ENCODE measurements at regions of chr1 and their contacts with region 1.

Region 1: DNA sequence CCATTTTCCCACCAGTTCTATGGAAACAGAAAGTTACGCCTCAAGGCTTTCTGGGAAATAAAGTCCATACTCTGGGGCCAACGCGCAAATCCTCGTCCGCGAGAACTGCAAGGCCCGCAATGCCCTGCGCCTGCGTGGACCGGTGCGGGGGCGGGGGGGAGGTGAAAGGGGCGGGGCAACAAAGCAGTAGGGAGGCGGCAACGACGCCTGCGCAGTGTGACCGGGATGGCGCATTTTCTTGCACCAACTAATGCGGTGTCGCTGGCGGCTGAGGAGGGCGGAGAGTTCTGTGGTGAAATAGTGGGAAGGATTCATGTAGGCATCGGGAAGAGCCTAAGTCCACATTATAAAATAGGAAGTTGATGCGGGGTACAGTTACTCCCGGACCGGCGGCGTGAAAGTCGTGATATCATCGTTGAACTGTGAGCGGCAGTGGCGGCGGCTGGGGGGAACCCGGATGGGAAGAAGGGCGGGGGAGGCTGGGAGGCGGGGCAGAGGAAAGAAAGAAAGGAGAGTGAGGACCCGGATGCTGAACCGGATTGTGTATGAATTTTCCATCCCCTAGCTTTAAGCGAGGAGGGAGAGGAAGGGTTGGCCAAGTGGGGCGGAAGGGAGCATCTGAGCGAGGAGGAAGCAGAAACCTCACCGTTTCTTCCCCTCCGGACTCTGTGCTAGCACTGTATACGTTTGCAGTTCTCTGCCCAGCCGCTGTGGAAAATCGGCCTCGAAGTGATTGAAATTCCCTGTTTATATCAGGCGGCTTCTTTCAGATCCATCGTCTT is at the start of gene GGPS1:
- DNase-seq: peak; percentile 98
- H3K4me3 ChIP-seq: peak within 1 kb of the TSS; percentile 94 to 95
- H3K27ac ChIP-seq: peak within 1 kb of the TSS; percentile 97 to 99
- H3K4me1 ChIP-seq: peaks cover 7% of the 10 kb centered on the region
- H3K27me3 ChIP-seq: no peaks in the 10 kb centered on the region
- CTCF ChIP-seq: peak in 1 of 4 experiments; percentile 37
- POLR2A ChIP-seq: peak; percentile 87
- total RNA-seq, gene GGPS1: 42.1 to 42.9 TPM

Region 2: GRCh38 chr1:235128456-235129328 is 199.9 kb before region 1 on chr1 and contains the start of gene TOMM20:
- intact Hi-C with region 1: loop called (anchors 2 kb)
- DNase-seq: peak; percentile 94
- H3K4me3 ChIP-seq: peak within 1 kb of the TSS; percentile 80 to 82
- H3K27ac ChIP-seq: peak within 1 kb of the TSS; percentile 79
- H3K4me1 ChIP-seq: no peaks in the 10 kb centered on the region
- H3K27me3 ChIP-seq: no peaks in the 10 kb centered on the region
- CTCF ChIP-seq: peak in 3 of 4 experiments; percentile 12 to 30 (median 21)
- POLR2A ChIP-seq: peak; percentile 49
- total RNA-seq, gene TOMM20: 77.1 to 135 TPM

Region 3: DNA sequence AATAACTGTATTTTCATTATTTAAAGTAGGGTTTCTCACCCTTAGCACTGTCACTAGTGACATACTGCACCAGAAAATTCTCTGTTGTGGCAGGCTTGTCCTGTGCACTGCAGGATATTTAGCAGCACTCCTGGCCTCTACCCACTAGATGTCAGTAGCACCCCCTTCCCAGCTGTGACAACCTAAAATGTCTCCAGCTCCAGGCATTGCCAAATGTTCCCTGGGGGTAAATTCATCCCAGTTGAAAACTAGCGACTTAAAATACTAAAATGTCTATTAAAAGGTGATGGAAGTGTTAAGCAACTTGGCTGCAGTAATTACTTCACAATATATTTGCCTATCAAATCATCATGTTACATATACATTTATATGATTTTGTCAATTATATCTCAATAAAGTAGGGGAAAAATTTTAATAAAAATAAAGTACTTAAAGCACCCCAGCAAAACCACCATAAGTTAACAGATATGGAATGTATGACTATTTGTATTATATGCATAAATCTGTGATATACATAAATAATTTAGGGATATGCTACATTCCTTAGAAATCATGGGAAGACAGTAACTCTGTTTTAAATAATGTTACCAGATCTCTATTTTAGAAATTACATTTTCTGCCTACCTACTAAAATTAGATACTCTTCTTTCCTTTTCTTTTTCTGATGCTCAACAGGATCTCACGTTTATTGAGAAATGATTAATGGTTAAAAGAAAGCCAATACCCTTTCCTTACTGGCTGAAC is 75.2 kb before region 1 on chr1:
- intact Hi-C with region 1: loop called (anchors 5 kb)
- DNase-seq: peak; percentile 33
- H3K4me3 ChIP-seq: no peak overlapping the region
- H3K27ac ChIP-seq: no peak overlapping the region
- H3K4me1 ChIP-seq: no peaks in the 10 kb centered on the region
- H3K27me3 ChIP-seq: no peaks in the 10 kb centered on the region
- CTCF ChIP-seq: peak; percentile 30 to 73 (median 58)
- POLR2A ChIP-seq: no peak

Region 4: GRCh38 chr1:235375919-235376605 is 47.5 kb after region 1 on chr1:
- intact Hi-C with region 1: no loop called
- DNase-seq: no peak
- H3K4me3 ChIP-seq: no peak overlapping the region
- H3K27ac ChIP-seq: no peak overlapping the region
- H3K4me1 ChIP-seq: no peaks in the 10 kb centered on the region
- H3K27me3 ChIP-seq: no peaks in the 10 kb centered on the region
- CTCF ChIP-seq: no peak
- POLR2A ChIP-seq: no peak

Region 5: GRCh38 chr1:235415008-235415904 is 86.7 kb after region 1 on chr1:
- intact Hi-C with region 1: loop called (anchors 5 kb)
- DNase-seq: peak; percentile 63
- H3K4me3 ChIP-seq: no peak overlapping the region
- H3K27ac ChIP-seq: no peak overlapping the region
- H3K4me1 ChIP-seq: no peaks in the 10 kb centered on the region
- H3K27me3 ChIP-seq: no peaks in the 10 kb centered on the region
- CTCF ChIP-seq: peak; percentile 45 to 82 (median 80)
- POLR2A ChIP-seq: no peak

Region 6: GRCh38 chr1:235504496-235505222 is 176.1 kb after region 1 on chr1:
- intact Hi-C with region 1: loop called (anchors 2 kb)
- DNase-seq: peak; percentile 99
- H3K4me3 ChIP-seq: peak overlapping the region; percentile 67 to 88
- H3K27ac ChIP-seq: peak overlapping the region; percentile 98
- H3K4me1 ChIP-seq: no peaks in the 10 kb centered on the region
- H3K27me3 ChIP-seq: no peaks in the 10 kb centered on the region
- CTCF ChIP-seq: peak; percentile 90 to 99 (median 96)
- POLR2A ChIP-seq: peak; percentile 6